ENCODE measurements at regions of chr2 and their contacts with region 1.

Region 1: GRCh38 chr2:64653349-64654062 is at the start of gene SERTAD2:
- DNase-seq: no peak
- ATAC-seq: peak; percentile 70
- H3K4me3 ChIP-seq: peak within 1 kb of the TSS; percentile 95
- H3K27ac ChIP-seq: peak within 1 kb of the TSS; percentile 81
- H3K4me1 ChIP-seq: peaks cover 51% of the 10 kb centered on the region
- H3K27me3 ChIP-seq: no peaks in the 10 kb centered on the region
- CTCF ChIP-seq: 0 out of 6 replicates have a peak, but pooled peaks of 1 of the 3 experiments have one; percentile 6
- EP300 ChIP-seq: no peak
- POLR2A ChIP-seq: peak; percentile 90
- RAD21 ChIP-seq: 0 out of 2 replicates have a peak, but pooled peaks have one; percentile 19
- polyA plus RNA-seq, gene SERTAD2: 7.9 TPM

Region 2: GRCh38 chr2:64666810-64667438 is 13.4 kb after region 1 on chr2:
- CTCF ChIA-PET with region 1: interaction called, 154 read pairs
- POLR2A ChIA-PET with region 1: interaction called, 120 read pairs
- RAD21 ChIA-PET with region 1: interaction called, 221 read pairs
- SMC1A ChIA-PET with region 1: interaction called, 144 read pairs
- in situ Hi-C with region 1: no loop called
- intact Hi-C with region 1: no loop called
- DNase-seq: no peak
- ATAC-seq: peak; percentile 81
- H3K4me3 ChIP-seq: peak overlapping the region; percentile 33
- H3K27ac ChIP-seq: peak overlapping the region; percentile 71
- H3K4me1 ChIP-seq: peaks cover 15% of the 10 kb centered on the region
- H3K27me3 ChIP-seq: no peaks in the 10 kb centered on the region
- CTCF ChIP-seq: no peak
- EP300 ChIP-seq: no peak; a peak in 1 of 4 replicates
- POLR2A ChIP-seq: no peak
- RAD21 ChIP-seq: peak; percentile 4; the same call in 1 of the 2 replicates

Region 3: DNA sequence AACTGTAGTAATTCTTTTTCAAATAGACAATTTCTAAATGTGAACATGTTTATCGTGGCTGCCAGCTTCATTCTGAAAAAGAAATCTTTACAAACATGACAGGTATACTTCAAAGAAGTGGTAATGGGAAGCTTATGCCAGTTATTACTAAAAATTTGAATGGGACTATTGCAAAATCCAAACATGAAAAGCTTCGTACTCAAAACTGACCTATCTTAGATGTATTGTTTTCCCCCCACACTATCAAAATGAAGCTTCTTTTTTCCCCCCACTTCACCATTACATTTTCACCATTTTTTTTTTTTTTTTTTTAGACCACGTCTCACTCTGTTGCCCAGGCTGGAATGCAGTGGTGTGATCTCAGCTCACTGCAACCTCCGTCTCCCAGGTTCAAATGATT is 50.7 kb after region 1 on chr2:
- CTCF ChIA-PET with region 1: interaction called, 11 read pairs
- POLR2A ChIA-PET with region 1: interaction called, 81 read pairs
- RAD21 ChIA-PET with region 1: interaction called, 55 read pairs
- SMC1A ChIA-PET with region 1: interaction called, 262 read pairs
- in situ Hi-C with region 1: no loop called
- intact Hi-C with region 1: no loop called
- DNase-seq: no peak
- ATAC-seq: peak; percentile 14
- H3K4me3 ChIP-seq: 0 out of 2 replicates have a peak overlapping the region, but pooled peaks have one; percentile 7
- H3K27ac ChIP-seq: peak overlapping the region; percentile 54
- H3K4me1 ChIP-seq: peaks cover 30% of the 10 kb centered on the region
- H3K27me3 ChIP-seq: no peaks in the 10 kb centered on the region
- CTCF ChIP-seq: no peak
- EP300 ChIP-seq: no peak
- POLR2A ChIP-seq: no peak
- RAD21 ChIP-seq: no peak

Region 4: DNA sequence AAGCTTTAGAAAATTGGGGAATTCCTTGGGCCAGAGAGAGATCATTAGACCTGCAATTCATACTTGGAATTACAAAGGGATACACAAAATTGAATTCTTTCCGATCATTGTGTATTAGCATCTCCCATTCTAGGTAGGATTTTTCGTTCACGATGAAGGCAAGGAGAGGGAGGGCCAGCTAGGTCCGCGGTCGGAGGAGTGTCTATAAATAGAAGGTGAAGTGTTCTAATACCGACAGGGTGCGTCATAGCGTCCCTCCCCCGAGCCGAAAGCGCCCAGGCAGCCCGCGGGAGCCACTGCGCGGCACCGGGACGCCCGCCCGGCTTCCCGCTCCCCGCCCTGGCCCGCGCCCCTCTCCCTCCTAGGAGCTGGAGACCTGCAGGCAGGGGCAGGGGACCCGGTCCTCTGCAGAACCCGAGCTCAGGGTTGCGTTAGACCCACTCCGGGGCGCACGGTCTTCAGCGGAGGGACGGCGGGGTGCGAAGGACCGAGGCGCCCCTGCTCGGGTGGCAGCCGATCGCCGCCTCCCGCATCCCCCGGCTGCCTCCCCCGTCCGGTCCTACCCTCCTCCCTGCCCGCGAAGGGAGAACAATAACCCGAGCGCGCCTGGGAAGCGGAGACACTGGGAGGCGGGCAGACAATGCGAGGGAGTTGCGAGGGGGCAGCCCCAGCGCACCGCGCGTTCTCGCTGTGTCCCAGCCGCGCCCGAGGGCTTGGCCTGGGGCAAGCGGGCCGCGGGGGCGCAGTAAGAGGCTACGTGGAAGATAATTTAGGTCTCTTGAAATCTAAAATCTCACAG is 114.4 kb after region 1 on chr2:
- CTCF ChIA-PET with region 1: interaction called, 12 read pairs
- POLR2A ChIA-PET with region 1: interaction called, 11 read pairs
- RAD21 ChIA-PET with region 1: interaction called, 14 read pairs
- SMC1A ChIA-PET with region 1: interaction called, 11 read pairs
- in situ Hi-C with region 1: no loop called
- intact Hi-C with region 1: no loop called
- DNase-seq: no peak
- ATAC-seq: peak; percentile 94
- H3K4me3 ChIP-seq: peak overlapping the region; percentile 84
- H3K27ac ChIP-seq: peak overlapping the region; percentile 87
- H3K4me1 ChIP-seq: peaks cover 12% of the 10 kb centered on the region
- H3K27me3 ChIP-seq: no peaks in the 10 kb centered on the region
- CTCF ChIP-seq: peak in 2 of 3 experiments; percentile 7 to 29; a peak in 2 of 6 replicates
- EP300 ChIP-seq: peak in 1 of 2 experiments; percentile 40; a peak in 2 of 4 replicates
- POLR2A ChIP-seq: peak; percentile 78
- RAD21 ChIP-seq: no peak

Region 5: GRCh38 chr2:64914735-64915509 is 261.4 kb after region 1 on chr2:
- CTCF ChIA-PET with region 1: no interaction called
- POLR2A ChIA-PET with region 1: interaction called, 6 read pairs
- RAD21 ChIA-PET with region 1: interaction called, 5 read pairs
- SMC1A ChIA-PET with region 1: interaction called, 27 read pairs
- in situ Hi-C with region 1: no loop called
- intact Hi-C with region 1: loop called (anchors 5 kb)
- DNase-seq: peak; percentile 96
- ATAC-seq: peak; percentile 68
- H3K4me3 ChIP-seq: peak overlapping the region; percentile 41
- H3K27ac ChIP-seq: peak overlapping the region; percentile 81
- H3K4me1 ChIP-seq: peaks cover 62% of the 10 kb centered on the region
- H3K27me3 ChIP-seq: no peaks in the 10 kb centered on the region
- CTCF ChIP-seq: no peak
- EP300 ChIP-seq: peak; percentile 73 to 80; a peak in 3 of 4 replicates
- POLR2A ChIP-seq: peak; percentile 72
- RAD21 ChIP-seq: no peak

Region 6: GRCh38 chr2:65003037-65003436 is 349.5 kb after region 1 on chr2:
- CTCF ChIA-PET with region 1: no interaction called
- POLR2A ChIA-PET with region 1: no interaction called
- RAD21 ChIA-PET with region 1: no interaction called
- SMC1A ChIA-PET with region 1: no interaction called
- in situ Hi-C with region 1: no loop called
- intact Hi-C with region 1: no loop called
- DNase-seq: no peak
- ATAC-seq: no peak
- H3K4me3 ChIP-seq: no peak overlapping the region
- H3K27ac ChIP-seq: no peak overlapping the region
- H3K4me1 ChIP-seq: no peaks in the 10 kb centered on the region
- H3K27me3 ChIP-seq: no peaks in the 10 kb centered on the region
- CTCF ChIP-seq: no peak
- EP300 ChIP-seq: no peak
- POLR2A ChIP-seq: no peak
- RAD21 ChIP-seq: no peak

Measured in GM12878 (cell line).